GM12878 (cell line): ENCODE measurements at regions of chr6 and their contacts with region 1.

Region 1: DNA sequence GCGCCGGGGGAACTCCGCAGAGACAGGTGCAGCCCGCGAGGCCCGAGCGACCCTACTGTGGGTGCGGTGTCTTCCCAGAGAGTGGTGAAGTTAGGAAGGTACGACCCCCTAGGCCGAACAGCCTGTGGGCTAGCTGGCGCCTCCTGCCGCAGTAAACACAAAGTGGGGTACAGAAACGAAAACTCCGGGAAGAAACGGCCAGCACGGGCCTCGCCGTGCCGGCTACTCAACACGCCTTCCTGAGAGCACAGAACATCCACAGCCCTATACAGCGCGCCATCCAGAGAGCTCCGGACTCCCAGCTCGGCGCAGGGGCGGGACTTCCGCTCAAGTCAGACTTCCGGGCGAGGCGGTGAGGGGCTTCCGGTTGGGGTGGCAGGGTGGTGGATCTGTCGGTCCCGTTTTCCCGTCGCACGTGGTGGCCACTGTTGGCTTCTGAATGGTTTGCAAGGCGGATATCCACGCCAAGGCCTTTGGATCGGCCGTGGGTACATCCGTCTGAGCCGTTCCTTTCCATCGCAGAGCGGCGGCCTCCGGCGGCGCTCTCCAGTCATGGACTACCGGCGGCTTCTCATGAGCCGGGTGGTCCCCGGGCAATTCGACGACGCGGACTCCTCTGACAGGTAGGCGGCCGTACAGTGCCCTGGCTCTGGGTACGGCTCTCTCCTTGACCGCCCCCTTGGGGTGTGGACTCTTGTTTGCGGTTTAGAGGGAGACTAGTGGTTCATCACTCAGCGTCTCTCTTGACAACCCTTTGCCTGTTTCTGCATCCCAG is at the starts of genes CAGE1 and RIOK1:
- DNase-seq: peak; percentile 74
- ATAC-seq: peak; percentile 96
- H3K4me3 ChIP-seq: peak within 1 kb of the TSS; percentile 89
- H3K27ac ChIP-seq: peak within 1 kb of the TSS; percentile 89
- H3K4me1 ChIP-seq: no peaks in the 10 kb centered on the region; the same call in 1 of the 2 replicates
- H3K27me3 ChIP-seq: no peaks in the 10 kb centered on the region
- CTCF ChIP-seq: no peak
- EP300 ChIP-seq: peak in 1 of 2 experiments; percentile 30; a peak in 1 of 4 replicates
- POLR2A ChIP-seq: peak; percentile 97
- RAD21 ChIP-seq: no peak
- polyA plus RNA-seq, gene CAGE1: 0.05 TPM in 1 of 2 experiments, not detected in the other
- polyA plus RNA-seq, gene RIOK1: 31.0 to 40.2 TPM

Region 2: DNA sequence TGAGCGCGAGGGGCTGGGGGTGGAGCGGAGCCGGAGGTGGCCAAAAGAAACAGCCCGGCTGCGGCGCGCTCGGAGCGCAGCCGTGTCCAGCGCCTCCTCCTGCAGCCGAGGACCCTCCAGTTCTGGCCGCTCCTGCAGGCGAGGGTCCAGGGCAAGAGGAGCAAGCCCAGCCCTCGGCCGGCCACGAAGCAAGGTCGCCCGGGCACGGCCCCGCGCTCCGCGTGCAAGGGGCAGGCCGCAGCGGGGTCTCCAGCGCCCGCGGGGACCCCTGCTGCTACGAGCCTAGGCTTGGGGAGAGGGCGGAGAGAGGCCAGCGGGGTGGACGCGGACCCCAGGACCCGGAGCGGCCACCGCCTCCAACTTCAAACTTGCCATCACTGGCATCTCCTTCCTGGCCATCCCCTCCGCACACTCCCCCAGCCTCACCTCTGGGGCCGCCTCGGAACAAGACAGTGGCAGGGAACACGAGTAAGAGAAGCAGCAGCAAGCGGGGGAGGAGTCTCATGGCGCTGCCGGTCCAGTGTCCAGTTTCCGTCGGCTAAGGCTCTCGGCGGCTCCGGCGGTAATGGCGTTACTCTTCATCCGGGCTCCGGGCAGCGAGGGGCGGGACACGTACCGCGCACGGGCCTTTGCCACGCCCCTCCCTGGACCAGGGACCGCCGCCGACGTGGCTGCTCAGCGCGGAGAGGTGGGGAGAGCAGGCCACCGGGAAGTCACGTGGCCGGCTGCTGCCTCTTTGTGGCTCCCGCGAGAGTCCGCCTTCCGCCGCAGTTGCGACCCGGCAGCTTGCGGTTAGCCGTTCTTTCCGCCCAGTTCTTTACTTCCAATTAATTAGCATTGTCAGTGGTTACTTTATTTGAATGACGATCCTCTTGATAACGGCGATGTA is 76.8 kb before region 1 on chr6 and contains the start of gene SSR1:
- CTCF ChIA-PET with region 1: interaction called, 3 read pairs
- POLR2A ChIA-PET with region 1: interaction called, 5 read pairs
- RAD21 ChIA-PET with region 1: interaction called, 11 read pairs
- SMC1A ChIA-PET with region 1: interaction called, 6 read pairs
- in situ Hi-C with region 1: no loop called
- intact Hi-C with region 1: loop called (anchors 1 kb)
- DNase-seq: peak; percentile 85
- ATAC-seq: peak; percentile 99
- H3K4me3 ChIP-seq: peak within 1 kb of the TSS; percentile 95
- H3K27ac ChIP-seq: peak within 1 kb of the TSS; percentile 82
- H3K4me1 ChIP-seq: peaks cover 6% of the 10 kb centered on the region
- H3K27me3 ChIP-seq: no peaks in the 10 kb centered on the region
- CTCF ChIP-seq: no peak
- EP300 ChIP-seq: no peak
- POLR2A ChIP-seq: peak; percentile 96
- RAD21 ChIP-seq: no peak
- polyA plus RNA-seq, gene SSR1: 123 to 151 TPM

Region 3: DNA sequence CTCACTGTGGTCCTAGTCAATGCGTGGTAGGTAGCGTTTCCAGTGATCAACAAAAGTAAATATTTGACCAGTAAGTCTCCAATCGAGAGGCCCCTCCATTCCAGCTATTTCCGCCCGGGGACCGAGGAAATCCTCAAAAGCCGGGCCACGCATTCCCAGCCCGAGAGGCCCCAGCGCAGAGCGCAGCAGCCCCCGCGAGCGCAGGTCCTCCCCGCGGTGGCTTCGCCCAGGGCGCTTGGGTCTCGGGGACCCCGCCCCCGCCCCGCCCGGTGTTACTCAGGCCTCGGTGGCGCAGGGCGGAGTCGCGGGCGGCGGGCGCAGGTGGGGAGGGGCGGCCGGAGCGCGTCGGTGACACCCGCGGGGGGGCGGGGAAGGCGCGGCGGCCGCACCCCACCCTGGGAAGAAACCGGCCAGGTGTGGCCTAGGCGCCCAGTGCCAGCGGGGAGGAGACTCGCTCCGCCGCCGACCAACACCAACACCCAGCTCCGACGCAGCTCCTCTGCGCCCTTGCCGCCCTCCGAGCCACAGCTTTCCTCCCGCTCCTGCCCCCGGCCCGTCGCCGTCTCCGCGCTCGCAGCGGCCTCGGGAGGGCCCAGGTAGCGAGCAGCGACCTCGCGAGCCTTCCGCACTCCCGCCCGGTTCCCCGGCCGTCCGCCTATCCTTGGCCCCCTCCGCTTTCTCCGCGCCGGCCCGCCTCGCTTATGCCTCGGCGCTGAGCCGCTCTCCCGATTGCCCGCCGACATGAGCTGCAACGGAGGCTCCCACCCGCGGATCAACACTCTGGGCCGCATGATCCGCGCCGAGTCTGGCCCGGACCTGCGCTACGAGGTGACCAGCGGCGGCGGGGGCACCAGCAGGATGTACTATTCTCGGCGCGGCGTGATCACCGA is 151.8 kb after region 1 on chr6 and contains the start of gene DSP:
- CTCF ChIA-PET with region 1: no interaction called
- POLR2A ChIA-PET with region 1: no interaction called
- RAD21 ChIA-PET with region 1: no interaction called
- SMC1A ChIA-PET with region 1: no interaction called
- in situ Hi-C with region 1: no loop called
- intact Hi-C with region 1: no loop called
- DNase-seq: no peak
- ATAC-seq: peak; percentile 62
- H3K4me3 ChIP-seq: peak within 1 kb of the TSS; percentile 29; the same call in 1 of the 2 replicates
- H3K27ac ChIP-seq: no peak within 1 kb of the TSS
- H3K4me1 ChIP-seq: no peaks in the 10 kb centered on the region
- H3K27me3 ChIP-seq: peaks cover 10 to 21% of the 10 kb centered on the region in 2 experiments
- CTCF ChIP-seq: no peak
- EP300 ChIP-seq: no peak
- POLR2A ChIP-seq: no peak
- RAD21 ChIP-seq: no peak
- polyA plus RNA-seq, gene DSP: not detected

Region 4: DNA sequence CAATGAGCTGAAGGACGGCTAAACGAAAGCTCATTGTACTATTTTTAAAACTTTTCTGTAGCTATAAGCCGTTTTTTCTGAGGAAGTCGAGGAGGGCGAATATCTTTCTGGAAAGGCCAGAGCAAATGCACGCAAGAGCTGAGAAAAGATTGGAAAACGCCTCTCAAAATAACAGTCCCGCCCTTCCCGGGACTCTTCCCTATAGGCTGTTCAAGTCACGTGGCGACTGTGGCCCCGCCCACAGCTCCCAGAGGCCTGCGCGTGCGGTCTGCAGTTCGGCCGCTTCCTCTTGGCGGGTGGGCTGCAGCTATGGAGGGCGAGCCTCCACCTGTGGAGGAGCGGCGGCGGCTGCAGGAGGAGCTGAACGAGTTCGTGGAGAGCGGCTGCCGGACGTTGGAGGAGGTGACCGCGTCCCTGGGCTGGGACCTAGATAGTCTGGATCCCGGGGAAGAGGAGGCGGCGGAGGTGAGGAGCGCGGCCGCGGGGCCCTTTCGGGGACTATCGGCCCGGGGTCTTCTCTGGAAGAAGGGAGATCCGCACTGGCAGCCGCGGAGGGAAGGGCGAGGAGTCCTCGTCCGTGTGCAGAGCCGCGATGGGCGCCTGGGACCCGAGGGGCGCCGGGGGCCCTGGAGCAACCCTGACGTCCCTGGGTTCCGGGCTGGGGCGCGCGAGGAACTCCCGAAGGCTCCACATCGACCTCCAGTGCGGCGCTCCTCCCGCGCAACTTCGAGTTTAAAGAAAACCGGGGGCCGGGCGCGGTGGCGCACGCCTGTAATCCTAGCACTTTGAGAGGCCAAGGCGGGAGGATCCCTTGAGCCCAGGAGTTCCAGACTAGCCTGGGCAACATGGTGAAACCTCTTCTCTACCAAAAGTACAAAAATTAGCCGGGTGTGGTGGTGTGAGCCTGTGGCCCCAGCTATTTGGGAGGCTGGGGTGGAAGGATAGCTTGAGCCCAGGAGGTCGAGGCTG is 200.6 kb after region 1 on chr6 and contains the start of gene SNRNP48:
- CTCF ChIA-PET with region 1: no interaction called
- POLR2A ChIA-PET with region 1: interaction called, 3 read pairs
- RAD21 ChIA-PET with region 1: interaction called, 3 read pairs
- SMC1A ChIA-PET with region 1: interaction called, 3 read pairs
- in situ Hi-C with region 1: no loop called
- intact Hi-C with region 1: loop called (anchors 10 kb)
- DNase-seq: peak; percentile 73
- ATAC-seq: peak; percentile 100
- H3K4me3 ChIP-seq: peak within 1 kb of the TSS; percentile 73
- H3K27ac ChIP-seq: peak within 1 kb of the TSS; percentile 55
- H3K4me1 ChIP-seq: peaks cover 3% of the 10 kb centered on the region; the same call in 1 of the 2 replicates
- H3K27me3 ChIP-seq: no peaks in the 10 kb centered on the region
- CTCF ChIP-seq: no peak
- EP300 ChIP-seq: no peak
- POLR2A ChIP-seq: peak; percentile 95
- RAD21 ChIP-seq: no peak
- polyA plus RNA-seq, gene SNRNP48: 3.2 to 5.0 TPM